Activated CD4-positive, alpha-beta T cell treated with anti-CD3 and anti-CD28 coated beads, Interleukin-2, amount 10 ng/mL, durations not matched to agents 24 days and 14 days (primary cell): ENCODE measurements at regions of chr6 and their contacts with region 1.

Region 1: GRCh38 chr6:24646782-24647181 is 791 bp upstream of the KIAA0319 start:
- DNase-seq: no peak
- H3K4me3 Mint-ChIP-seq: peak overlapping the region; percentile 85
- H3K27ac Mint-ChIP-seq: no peak overlapping the region
- H3K4me1 Mint-ChIP-seq: peaks cover 15% of the 10 kb centered on the region
- H3K27me3 Mint-ChIP-seq: peaks cover 26% of the 10 kb centered on the region

Region 2: DNA sequence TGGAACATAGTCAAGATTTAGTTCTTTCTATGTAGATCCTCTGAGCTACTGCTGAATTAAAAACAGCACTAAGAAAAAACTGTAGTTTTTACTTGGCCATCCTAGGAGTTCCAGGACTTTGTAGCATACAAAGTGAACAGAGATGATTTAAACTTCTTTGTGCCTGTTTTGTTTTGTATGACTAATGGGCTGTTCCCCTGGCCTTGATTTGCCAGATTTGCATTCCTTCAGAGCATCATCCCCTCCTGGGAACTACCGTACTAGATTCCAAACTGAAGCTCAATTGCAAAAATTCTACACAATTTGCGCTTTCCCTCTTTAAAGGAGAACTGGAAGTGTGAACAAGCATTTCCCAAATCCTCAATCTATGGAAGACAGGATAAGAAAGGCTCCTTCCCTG is 43.2 kb after region 1 on chr6:
- intact Hi-C with region 1: loop called (anchors 10 kb)
- DNase-seq: no peak
- H3K4me3 Mint-ChIP-seq: no peak overlapping the region
- H3K27ac Mint-ChIP-seq: no peak overlapping the region
- H3K4me1 Mint-ChIP-seq: peaks cover 4% of the 10 kb centered on the region
- H3K27me3 Mint-ChIP-seq: no peaks in the 10 kb centered on the region

Region 3: GRCh38 chr6:24960991-24961475 is 314.3 kb after region 1 on chr6:
- intact Hi-C with region 1: no loop called
- DNase-seq: no peak
- H3K4me3 Mint-ChIP-seq: peak overlapping the region; percentile 47
- H3K27ac Mint-ChIP-seq: peak overlapping the region; percentile 80
- H3K4me1 Mint-ChIP-seq: peaks cover 49% of the 10 kb centered on the region
- H3K27me3 Mint-ChIP-seq: no peaks in the 10 kb centered on the region